ENCODE measurements at regions of chr12 and their contacts with region 1.

Region 1: GRCh38 chr12:51424662-51425438 is at the start of gene SLC4A8:
- DNase-seq: peak; percentile 89
- H3K4me3 Mint-ChIP-seq: peak within 1 kb of the TSS; percentile 80
- H3K27ac Mint-ChIP-seq: peak within 1 kb of the TSS; percentile 55
- H3K4me1 Mint-ChIP-seq: peaks cover 42% of the 10 kb centered on the region
- H3K27me3 Mint-ChIP-seq: peaks cover 32% of the 10 kb centered on the region

Region 2: GRCh38 chr12:51395283-51396230 is 29.3 kb before region 1 on chr12:
- CTCF ChIA-PET with region 1: interaction called, 18 read pairs
- DNase-seq: peak; percentile 60
- H3K4me3 Mint-ChIP-seq: peak overlapping the region; percentile 66
- H3K27ac Mint-ChIP-seq: peak overlapping the region; percentile 93
- H3K4me1 Mint-ChIP-seq: peaks cover 49% of the 10 kb centered on the region
- H3K27me3 Mint-ChIP-seq: peaks cover 22% of the 10 kb centered on the region

Region 3: GRCh38 chr12:51531978-51532497 is 107.2 kb after region 1 on chr12:
- CTCF ChIA-PET with region 1: interaction called, 199 read pairs
- DNase-seq: peak; percentile 88
- H3K4me3 Mint-ChIP-seq: no peak overlapping the region
- H3K27ac Mint-ChIP-seq: no peak overlapping the region
- H3K4me1 Mint-ChIP-seq: peaks cover 10% of the 10 kb centered on the region
- H3K27me3 Mint-ChIP-seq: peaks cover 56% of the 10 kb centered on the region

Region 4: GRCh38 chr12:51593539-51593938 is 168.7 kb after region 1 on chr12:
- CTCF ChIA-PET with region 1: interaction called, 13 read pairs
- DNase-seq: peak; percentile 66
- H3K4me3 Mint-ChIP-seq: no peak overlapping the region
- H3K27ac Mint-ChIP-seq: no peak overlapping the region
- H3K4me1 Mint-ChIP-seq: peaks cover 25% of the 10 kb centered on the region
- H3K27me3 Mint-ChIP-seq: peaks cover 66% of the 10 kb centered on the region

Region 5: DNA sequence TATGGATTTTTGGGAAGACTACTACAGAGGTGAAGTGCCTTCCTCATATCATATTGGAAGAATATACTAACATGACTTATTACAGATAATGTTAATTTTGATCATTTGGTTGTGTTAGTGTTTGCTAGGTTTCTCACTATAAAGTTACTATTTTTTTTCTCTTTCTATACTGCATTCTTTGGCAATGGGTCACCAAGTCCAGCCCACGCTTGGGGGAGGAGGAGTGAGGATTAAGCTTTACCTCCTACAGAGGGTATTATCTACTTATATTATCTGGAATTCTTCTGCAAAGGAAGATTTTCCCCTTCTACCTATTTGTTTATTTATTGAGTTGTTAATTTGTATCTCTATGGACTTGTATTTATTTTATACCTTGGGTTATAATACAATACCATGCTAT is 197.7 kb after region 1 on chr12:
- CTCF ChIA-PET with region 1: no interaction called
- DNase-seq: no peak
- H3K4me3 Mint-ChIP-seq: no peak overlapping the region
- H3K27ac Mint-ChIP-seq: no peak overlapping the region
- H3K4me1 Mint-ChIP-seq: no peaks in the 10 kb centered on the region
- H3K27me3 Mint-ChIP-seq: peaks cover 17% of the 10 kb centered on the region

Region 6: GRCh38 chr12:51823875-51824565 is 399.2 kb after region 1 on chr12:
- CTCF ChIA-PET with region 1: interaction called, 25 read pairs
- DNase-seq: peak; percentile 37
- H3K4me3 Mint-ChIP-seq: no peak overlapping the region
- H3K27ac Mint-ChIP-seq: no peak overlapping the region
- H3K4me1 Mint-ChIP-seq: peaks cover 29% of the 10 kb centered on the region
- H3K27me3 Mint-ChIP-seq: peaks cover 50% of the 10 kb centered on the region

Measured in activated naive CD4-positive, alpha-beta T cell treated with anti-CD3 and anti-CD28 coated beads, Interleukin-2, amount 10 ng/mL, durations not matched to agents 7 days and 5 days (primary cell).